CD8-positive, alpha-beta T cell (primary cell): ENCODE measurements at regions of chr4 and their contacts with region 1.

Region 1: DNA sequence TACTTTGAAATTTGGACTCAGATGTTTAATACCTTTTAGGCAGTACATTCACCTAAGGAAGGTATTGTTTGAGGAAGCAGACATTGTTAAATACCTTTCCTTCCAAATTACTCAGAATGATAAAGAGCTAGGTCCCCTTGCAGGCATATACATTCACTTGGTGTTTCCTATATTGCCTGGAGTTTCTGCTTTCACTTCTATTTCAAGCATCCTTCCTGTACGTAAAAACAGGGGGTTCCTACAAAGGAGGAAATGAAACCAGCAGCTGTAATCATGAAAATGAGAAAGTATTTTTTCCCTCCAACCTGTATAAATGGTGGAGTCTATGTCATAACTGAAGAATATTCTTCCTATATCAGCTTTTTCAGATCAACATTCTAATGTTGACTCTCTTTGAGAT is 90.4 kb upstream of the RASGEF1B start:
- DNase-seq: peak in 2 of 9 experiments; percentile 47 to 76
- ATAC-seq: peak; percentile 88
- H3K4me3 ChIP-seq: no peak overlapping the region
- H3K4me3 Mint-ChIP-seq: peak overlapping the region; percentile 19
- H3K27ac ChIP-seq: peak overlapping the region in 1 of 2 experiments; percentile 50
- H3K27ac Mint-ChIP-seq: peak overlapping the region; percentile 73
- H3K4me1 ChIP-seq: peaks cover 5% of the 10 kb centered on the region
- H3K4me1 Mint-ChIP-seq: peaks cover 10% of the 10 kb centered on the region
- H3K27me3 ChIP-seq: no peaks in the 10 kb centered on the region
- H3K27me3 Mint-ChIP-seq: no peaks in the 10 kb centered on the region
- CTCF ChIP-seq: no peak

Region 2: DNA sequence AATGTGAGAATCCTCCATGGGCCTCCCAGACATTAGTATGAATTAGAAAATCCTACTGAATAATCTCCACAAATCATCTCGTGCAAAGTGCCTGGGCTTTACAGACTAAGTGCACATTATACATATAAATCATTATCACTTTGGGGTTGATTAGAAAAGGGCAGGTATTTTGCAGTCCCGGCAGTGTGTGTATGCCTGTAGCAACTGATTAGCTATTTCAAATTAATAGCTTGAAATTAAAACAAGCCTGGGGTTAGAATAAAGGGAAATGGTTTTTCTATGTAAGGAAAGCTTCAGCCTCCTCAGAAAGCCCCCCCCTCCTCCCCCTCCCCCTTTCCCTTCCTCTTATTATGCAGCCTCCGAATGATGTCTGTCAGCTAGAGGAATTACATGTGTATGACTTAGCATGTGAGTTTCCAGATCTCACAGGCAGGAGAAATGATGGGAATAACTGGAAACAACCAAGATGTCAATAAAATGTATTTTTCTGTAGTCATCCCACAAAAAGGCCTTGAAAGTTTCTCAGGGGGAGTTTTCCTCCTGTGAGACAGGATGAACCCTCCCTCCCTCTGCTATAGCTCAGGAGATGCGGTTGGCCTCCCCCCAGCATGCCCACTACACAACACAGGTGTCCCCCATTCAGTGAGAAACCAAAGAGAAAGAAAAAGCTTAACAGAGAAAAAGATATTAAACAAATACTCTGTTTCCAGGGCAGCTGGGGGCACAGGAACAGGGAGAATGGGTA is 49.2 kb before region 1 on chr4:
- CTCF ChIA-PET with region 1: no interaction called
- POLR2A ChIA-PET with region 1: no interaction called
- intact Hi-C with region 1: loop called in 1 of 2 experiments (anchors 5 kb)
- DNase-seq: no peak
- ATAC-seq: no peak
- H3K4me3 ChIP-seq: no peak overlapping the region
- H3K4me3 Mint-ChIP-seq: no peak overlapping the region
- H3K27ac ChIP-seq: no peak overlapping the region
- H3K27ac Mint-ChIP-seq: no peak overlapping the region
- H3K4me1 ChIP-seq: no peaks in the 10 kb centered on the region
- H3K4me1 Mint-ChIP-seq: peaks cover 26% of the 10 kb centered on the region
- H3K27me3 ChIP-seq: no peaks in the 10 kb centered on the region
- H3K27me3 Mint-ChIP-seq: no peaks in the 10 kb centered on the region
- CTCF ChIP-seq: no peak